ENCODE measurements at regions of chr21 and their contacts with region 1.

Region 1: GRCh38 chr21:33205476-33205875 is 24.3 kb upstream of the IFNAR2 start:
- DNase-seq: peak; percentile 55
- ATAC-seq: peak; percentile 33
- H3K4me3 ChIP-seq: peak overlapping the region in 3 of 5 experiments; percentile 9 to 37 (median 36)
- H3K4me3 Mint-ChIP-seq: peak overlapping the region; percentile 76
- H3K27ac ChIP-seq: peak overlapping the region; percentile 70 to 79
- H3K27ac Mint-ChIP-seq: peak overlapping the region; percentile 89
- H3K4me1 ChIP-seq: peaks cover 48 to 51% of the 10 kb centered on the region in 2 donors
- H3K4me1 Mint-ChIP-seq: peaks cover 53% of the 10 kb centered on the region
- H3K27me3 ChIP-seq: no peaks in the 10 kb centered on the region
- H3K27me3 Mint-ChIP-seq: no peaks in the 10 kb centered on the region
- CTCF ChIP-seq: no peak

Region 2: GRCh38 chr21:33238565-33239255 is 33.2 kb after region 1 on chr21:
- CTCF ChIA-PET with region 1: interaction called, 11 read pairs
- POLR2A ChIA-PET with region 1: interaction called, 3 read pairs
- intact Hi-C with region 1: no loop called
- DNase-seq: peak; percentile 31
- ATAC-seq: peak; percentile 53
- H3K4me3 ChIP-seq: peak overlapping the region in 1 of 5 experiments; percentile 35
- H3K4me3 Mint-ChIP-seq: peak overlapping the region; percentile 69
- H3K27ac ChIP-seq: peak overlapping the region; percentile 34 to 46
- H3K27ac Mint-ChIP-seq: peak overlapping the region; percentile 71
- H3K4me1 ChIP-seq: peaks cover 18 to 43% of the 10 kb centered on the region in 2 donors
- H3K4me1 Mint-ChIP-seq: peaks cover 53% of the 10 kb centered on the region
- H3K27me3 ChIP-seq: no peaks in the 10 kb centered on the region
- H3K27me3 Mint-ChIP-seq: no peaks in the 10 kb centered on the region
- CTCF ChIP-seq: no peak

Measured in B cell (primary cell).